ENCODE measurements at regions of chr9 and their contacts with region 1.

Region 1: GRCh38 chr9:112750111-112750767 is at the start of gene SNX30:
- DNase-seq: peak; percentile 87
- H3K4me3 Mint-ChIP-seq: peak within 1 kb of the TSS; percentile 94
- H3K27ac Mint-ChIP-seq: peak within 1 kb of the TSS; percentile 81
- H3K4me1 Mint-ChIP-seq: peaks cover 19% of the 10 kb centered on the region
- H3K27me3 Mint-ChIP-seq: no peaks in the 10 kb centered on the region
- CTCF ChIP-seq: no peak
- total RNA-seq, gene SNX30: 7.9 and 8.7 TPM in 2 replicates

Region 2: GRCh38 chr9:112793213-112793810 is 43.1 kb after region 1 on chr9:
- CTCF ChIA-PET with region 1: no interaction called
- intact Hi-C with region 1: loop called (anchors 5 kb)
- DNase-seq: peak; percentile 77
- H3K4me3 Mint-ChIP-seq: no peak overlapping the region
- H3K27ac Mint-ChIP-seq: no peak overlapping the region
- H3K4me1 Mint-ChIP-seq: peaks cover 13% of the 10 kb centered on the region
- H3K27me3 Mint-ChIP-seq: no peaks in the 10 kb centered on the region
- CTCF ChIP-seq: peak; percentile 73